WTC11 (cell line): ENCODE measurements at regions of chr16 and their contacts with region 1.

Region 1: GRCh38 chr16:4517812-4518680 is 20.5 kb downstream of the CDIP1 start:
- DNase-seq: peak; percentile 80
- ATAC-seq: peak; percentile 89
- H3K4me3 Mint-ChIP-seq: no peak overlapping the region
- H3K27ac Mint-ChIP-seq: peak overlapping the region; percentile 80
- H3K4me1 Mint-ChIP-seq: peaks cover 43% of the 10 kb centered on the region
- H3K27me3 Mint-ChIP-seq: no peaks in the 10 kb centered on the region
- CTCF ChIP-seq: peak; percentile 62

Region 2: DNA sequence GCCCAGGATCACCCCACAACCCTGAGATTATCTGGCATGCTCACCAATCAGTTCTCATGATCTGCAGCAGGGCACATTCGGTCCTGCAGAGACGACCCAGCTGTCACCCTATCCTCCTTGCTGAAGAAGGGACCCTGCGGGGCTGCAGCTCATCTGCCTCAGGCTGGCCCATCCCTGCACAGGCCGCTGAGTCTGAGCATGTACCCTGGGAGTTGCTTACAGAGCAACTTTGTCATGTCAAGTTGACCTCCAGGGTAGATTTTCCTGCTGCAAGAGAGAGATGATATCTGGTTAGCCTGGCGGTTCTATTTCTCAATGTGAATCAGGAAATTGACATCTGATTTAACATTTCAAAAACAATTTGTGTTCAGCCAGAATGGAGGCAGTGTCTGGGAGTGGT is 365.8 kb before region 1 on chr16:
- CTCF ChIA-PET with region 1: no interaction called
- POLR2A ChIA-PET with region 1: no interaction called
- DNase-seq: no peak
- ATAC-seq: no peak
- H3K4me3 Mint-ChIP-seq: no peak overlapping the region
- H3K27ac Mint-ChIP-seq: no peak overlapping the region
- H3K4me1 Mint-ChIP-seq: no peaks in the 10 kb centered on the region
- H3K27me3 Mint-ChIP-seq: no peaks in the 10 kb centered on the region
- CTCF ChIP-seq: no peak

Region 3: GRCh38 chr16:4506450-4506849 is 11.6 kb before region 1 on chr16:
- CTCF ChIA-PET with region 1: interaction called, 19 read pairs
- POLR2A ChIA-PET with region 1: no interaction called
- DNase-seq: peak; percentile 51
- ATAC-seq: peak; percentile 88
- H3K4me3 Mint-ChIP-seq: no peak overlapping the region
- H3K27ac Mint-ChIP-seq: peak overlapping the region; percentile 13
- H3K4me1 Mint-ChIP-seq: peaks cover 6% of the 10 kb centered on the region; the same call in 1 of the 2 replicates
- H3K27me3 Mint-ChIP-seq: no peaks in the 10 kb centered on the region; the same call in 1 of the 2 replicates
- CTCF ChIP-seq: peak; percentile 88

Region 4: DNA sequence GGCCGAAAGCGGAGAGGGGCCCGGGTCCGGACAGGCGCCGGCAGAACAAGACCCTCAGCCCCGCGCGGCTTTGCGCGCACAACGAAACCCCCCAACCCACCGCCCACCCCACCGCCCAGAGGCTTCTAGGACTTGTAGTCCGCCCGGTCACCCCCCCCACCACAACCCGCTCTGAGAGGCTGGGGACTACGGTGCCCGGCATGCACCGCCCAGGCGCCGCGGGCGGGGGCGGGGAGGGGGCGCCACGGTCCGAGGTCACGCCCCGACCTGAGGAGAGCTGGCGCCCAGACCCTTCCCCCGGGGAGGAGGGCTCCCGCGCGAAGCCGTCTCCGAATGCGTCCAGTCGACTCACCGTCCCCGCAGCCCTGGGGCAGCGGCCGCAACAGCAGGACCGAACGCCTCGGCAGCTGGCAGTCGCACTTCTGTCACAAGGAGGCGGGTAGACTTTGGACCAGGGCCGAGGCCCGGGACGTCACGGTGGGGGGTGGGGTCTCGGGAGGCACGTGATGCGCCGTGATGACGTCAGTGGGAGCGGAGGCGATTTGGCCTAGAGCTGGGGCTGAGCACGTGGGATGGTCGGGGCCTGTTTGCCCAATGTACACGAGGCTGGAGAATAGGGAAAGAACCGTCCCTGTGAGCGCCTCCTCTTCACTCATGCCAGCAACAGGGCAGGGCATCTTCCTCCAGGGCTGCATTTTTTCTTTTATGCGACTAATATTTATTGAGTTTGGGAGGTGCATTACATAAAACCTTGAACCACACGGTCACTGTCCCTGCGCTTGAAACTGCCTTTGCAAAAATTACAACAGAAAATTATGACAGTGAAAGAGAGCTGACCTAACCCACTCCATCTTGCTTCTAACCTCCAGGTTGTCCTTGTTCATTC is 20.5 kb after region 1 on chr16 and contains the start of gene CDIP1:
- CTCF ChIA-PET with region 1: interaction called, 12 read pairs
- POLR2A ChIA-PET with region 1: interaction called, 3 read pairs
- DNase-seq: peak; percentile 95
- ATAC-seq: peak; percentile 90
- H3K4me3 Mint-ChIP-seq: peak within 1 kb of the TSS; percentile 80
- H3K27ac Mint-ChIP-seq: 0 out of 2 replicates have a peak within 1 kb of the TSS, but pooled peaks have one; percentile 65
- H3K4me1 Mint-ChIP-seq: peaks cover 30% of the 10 kb centered on the region
- H3K27me3 Mint-ChIP-seq: peaks cover 32% of the 10 kb centered on the region
- CTCF ChIP-seq: no peak
- total RNA-seq, gene CDIP1: 68.9 to 79.2 TPM (median 78.9 TPM) in 3 replicates

Region 5: DNA sequence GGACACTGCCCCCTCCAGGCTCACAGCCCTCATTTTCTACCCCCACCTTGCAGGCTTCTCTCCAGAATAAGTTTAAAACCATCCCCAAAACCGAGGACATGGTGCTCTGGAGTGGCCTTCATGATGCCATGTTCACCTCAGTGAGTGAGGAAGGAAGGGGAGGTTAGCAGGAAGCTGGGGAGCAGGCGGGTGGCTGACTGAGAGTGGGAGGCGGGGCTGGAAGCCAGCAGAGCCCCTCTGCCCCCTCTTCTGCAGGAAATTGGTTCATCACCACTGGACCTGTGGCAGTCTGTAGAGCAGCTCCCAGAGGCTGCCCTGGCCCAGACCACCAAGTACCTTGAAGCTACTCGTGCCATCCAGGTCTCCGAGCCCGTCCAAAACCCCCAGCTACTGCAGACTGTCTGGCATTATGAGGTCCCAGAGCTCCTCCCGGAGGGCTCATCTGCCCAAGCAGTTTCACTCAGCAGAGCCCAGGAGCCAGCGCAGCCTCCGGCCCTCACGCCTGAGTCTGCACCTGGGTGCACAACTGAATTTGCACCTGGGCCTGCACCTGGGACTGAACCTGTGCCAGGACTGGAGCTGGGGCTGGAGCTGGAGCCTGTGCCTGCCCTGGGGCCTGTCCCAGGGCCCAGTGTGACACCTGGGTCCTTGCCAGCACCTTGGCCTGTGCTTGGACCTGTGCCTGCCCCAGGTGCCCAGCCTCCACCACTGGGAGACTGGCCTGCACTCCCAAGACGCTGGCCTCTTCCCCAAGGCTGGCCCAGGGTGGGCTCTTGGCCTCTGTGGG is 57.1 kb after region 1 on chr16:
- CTCF ChIA-PET with region 1: interaction called, 41 read pairs
- POLR2A ChIA-PET with region 1: no interaction called
- DNase-seq: peak; percentile 66
- ATAC-seq: peak; percentile 71
- H3K4me3 Mint-ChIP-seq: no peak overlapping the region
- H3K27ac Mint-ChIP-seq: no peak overlapping the region
- H3K4me1 Mint-ChIP-seq: peaks cover 18% of the 10 kb centered on the region
- H3K27me3 Mint-ChIP-seq: peaks cover 5% of the 10 kb centered on the region
- CTCF ChIP-seq: no peak

Region 6: GRCh38 chr16:4616047-4616811 is 98.2 kb after region 1 on chr16:
- CTCF ChIA-PET with region 1: interaction called, 27 read pairs
- POLR2A ChIA-PET with region 1: interaction called, 3 read pairs
- DNase-seq: peak; percentile 99
- ATAC-seq: peak; percentile 81
- H3K4me3 Mint-ChIP-seq: peak overlapping the region; percentile 87
- H3K27ac Mint-ChIP-seq: peak overlapping the region; percentile 100
- H3K4me1 Mint-ChIP-seq: peaks cover 38% of the 10 kb centered on the region
- H3K27me3 Mint-ChIP-seq: no peaks in the 10 kb centered on the region
- CTCF ChIP-seq: no peak

Region 7: DNA sequence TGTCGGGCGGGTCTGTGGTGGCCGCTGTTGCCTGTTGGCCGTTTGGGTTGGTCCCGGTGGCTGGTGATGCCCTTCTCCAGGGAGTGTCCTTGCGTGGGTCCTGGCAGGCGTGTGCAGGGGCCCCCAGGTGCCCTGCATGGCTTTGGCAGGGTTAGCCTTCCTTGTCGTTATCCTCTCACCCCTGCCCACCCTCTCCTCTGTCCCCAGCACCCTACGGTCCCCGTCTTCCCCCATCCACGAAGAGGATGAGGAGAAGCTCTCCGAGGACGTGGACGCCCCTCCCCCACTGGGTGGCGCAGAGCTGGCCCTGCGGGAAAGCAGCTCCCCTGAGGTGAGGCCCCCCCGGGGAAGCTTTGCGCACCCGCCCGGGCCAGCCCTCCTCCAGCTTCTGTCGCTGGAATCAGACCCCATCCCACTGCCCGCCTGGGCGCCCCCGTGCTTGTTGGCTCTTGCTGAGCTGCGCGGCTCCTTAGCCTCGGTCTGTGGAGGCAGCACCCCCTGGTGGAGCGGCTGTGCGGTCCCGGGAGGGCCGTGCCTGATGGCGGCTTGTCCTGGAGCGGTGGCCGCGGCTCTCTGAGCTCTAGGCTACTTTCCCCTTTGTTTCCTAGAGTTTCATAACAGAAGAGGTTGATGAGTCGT is 164.7 kb after region 1 on chr16:
- CTCF ChIA-PET with region 1: interaction called, 17 read pairs
- POLR2A ChIA-PET with region 1: no interaction called
- DNase-seq: peak; percentile 86
- ATAC-seq: peak; percentile 92
- H3K4me3 Mint-ChIP-seq: no peak overlapping the region
- H3K27ac Mint-ChIP-seq: no peak overlapping the region
- H3K4me1 Mint-ChIP-seq: no peaks in the 10 kb centered on the region
- H3K27me3 Mint-ChIP-seq: no peaks in the 10 kb centered on the region
- CTCF ChIP-seq: peak; percentile 49; the same call in 1 of the 2 replicates

Region 8: GRCh38 chr16:4746991-4747574 is 229.0 kb after region 1 on chr16:
- CTCF ChIA-PET with region 1: no interaction called
- POLR2A ChIA-PET with region 1: no interaction called
- DNase-seq: no peak
- ATAC-seq: no peak
- H3K4me3 Mint-ChIP-seq: no peak overlapping the region
- H3K27ac Mint-ChIP-seq: no peak overlapping the region
- H3K4me1 Mint-ChIP-seq: peaks cover 20% of the 10 kb centered on the region
- H3K27me3 Mint-ChIP-seq: no peaks in the 10 kb centered on the region; the same call in 1 of the 2 replicates
- CTCF ChIP-seq: no peak